AG04449 (cell line): ENCODE measurements at regions of chr12 and their contacts with region 1.

Region 1: GRCh38 chr12:122225683-122226407 is at the start of gene DIABLO:
- DNase-seq: peak; percentile 90
- H3K4me3 ChIP-seq: peak within 1 kb of the TSS; percentile 95
- CTCF ChIP-seq: no peak

Region 2: GRCh38 chr12:122206111-122206881 is 19.5 kb before region 1 on chr12:
- CTCF ChIA-PET with region 1: interaction called, 18 read pairs
- POLR2A ChIA-PET with region 1: no interaction called
- DNase-seq: no peak
- H3K4me3 ChIP-seq: no peak overlapping the region
- CTCF ChIP-seq: no peak

Region 3: DNA sequence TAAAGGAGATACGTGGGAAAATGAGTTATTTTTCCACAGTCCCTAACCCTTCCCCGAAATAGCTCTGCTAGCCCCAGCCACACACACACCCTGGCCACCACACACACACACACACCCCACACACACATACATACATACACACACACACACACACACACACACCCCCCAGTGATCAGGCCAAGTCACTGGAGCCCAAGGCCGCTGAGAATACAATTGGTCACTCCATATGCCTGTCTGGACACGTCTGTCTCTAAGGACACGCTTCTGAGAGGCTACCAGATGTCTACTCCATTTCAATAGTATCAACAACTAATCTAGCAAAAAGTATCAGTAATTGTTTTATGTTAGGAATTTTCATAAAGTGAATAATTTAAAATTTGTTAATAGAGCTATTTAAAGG is 13.0 kb after region 1 on chr12:
- CTCF ChIA-PET with region 1: no interaction called
- POLR2A ChIA-PET with region 1: no interaction called
- DNase-seq: no peak
- H3K4me3 ChIP-seq: no peak overlapping the region
- CTCF ChIP-seq: no peak